T-cell (primary cell): ENCODE measurements at regions of chr3 and their contacts with region 1.

Region 1: GRCh38 chr3:107660306-107660976 is 137.7 kb downstream of the BBX start:
- DNase-seq: peak in 2 of 35 experiments; percentile 13 to 58
- ATAC-seq: no peak
- H3K4me3 ChIP-seq: no peak overlapping the region
- H3K4me3 Mint-ChIP-seq: no peak overlapping the region
- H3K27ac ChIP-seq: no peak overlapping the region
- H3K27ac Mint-ChIP-seq: no peak overlapping the region
- H3K4me1 ChIP-seq: peaks cover 0 to 10% of the 10 kb centered on the region in 2 experiments
- H3K4me1 Mint-ChIP-seq: peaks cover 26 to 30% (median 28%) of the 10 kb centered on the region in 3 donors
- H3K27me3 ChIP-seq: no peaks in the 10 kb centered on the region
- H3K27me3 Mint-ChIP-seq: no peaks in the 10 kb centered on the region

Region 2: GRCh38 chr3:107670986-107671385 is 10.5 kb after region 1 on chr3:
- CTCF ChIA-PET with region 1: interaction called, 19 to 40 read pairs
- POLR2A ChIA-PET with region 1: interaction called, 3 to 5 read pairs
- DNase-seq: no peak
- ATAC-seq: no peak
- H3K4me3 ChIP-seq: no peak overlapping the region
- H3K4me3 Mint-ChIP-seq: no peak overlapping the region
- H3K27ac ChIP-seq: no peak overlapping the region
- H3K27ac Mint-ChIP-seq: no peak overlapping the region
- H3K4me1 ChIP-seq: peaks cover 0 to 6% of the 10 kb centered on the region in 2 experiments
- H3K4me1 Mint-ChIP-seq: peaks cover 35 to 47% (median 40%) of the 10 kb centered on the region in 3 donors
- H3K27me3 ChIP-seq: no peaks in the 10 kb centered on the region
- H3K27me3 Mint-ChIP-seq: no peaks in the 10 kb centered on the region

Region 3: DNA sequence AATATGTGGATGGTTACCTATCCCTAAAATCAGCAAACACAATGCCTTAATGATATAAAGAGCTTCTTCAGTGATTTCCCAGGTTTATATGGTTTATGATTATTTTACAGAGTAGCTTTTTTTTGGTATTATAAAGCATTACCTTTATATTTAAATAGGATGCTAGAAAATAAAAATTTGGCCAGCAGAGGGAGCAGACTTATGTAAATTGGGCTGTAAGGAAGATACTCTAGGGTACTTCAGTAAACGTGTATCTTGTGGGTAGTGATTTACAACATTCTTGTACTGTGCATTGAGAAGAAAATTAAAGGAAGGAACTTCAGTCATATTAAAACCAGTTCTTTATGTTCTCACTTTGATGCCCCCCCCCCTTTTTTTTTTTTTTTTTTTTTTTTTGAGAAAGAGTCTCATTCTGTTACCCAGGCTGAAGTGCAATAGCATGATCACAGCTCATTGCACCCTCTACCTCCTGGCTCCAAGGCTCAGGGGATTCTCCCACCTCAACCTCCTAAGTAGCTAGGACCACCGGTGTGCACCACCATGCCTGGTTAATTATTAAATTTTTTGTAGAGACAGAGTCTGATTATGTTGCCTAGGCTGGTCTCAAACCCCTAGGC is 30.2 kb after region 1 on chr3:
- CTCF ChIA-PET with region 1: interaction called, 4 to 23 read pairs
- POLR2A ChIA-PET with region 1: no interaction called
- DNase-seq: peak in 2 of 35 experiments; percentile 6 to 71
- ATAC-seq: peak; percentile 43 to 74 (median 54)
- H3K4me3 ChIP-seq: no peak overlapping the region
- H3K4me3 Mint-ChIP-seq: no peak overlapping the region
- H3K27ac ChIP-seq: no peak overlapping the region
- H3K27ac Mint-ChIP-seq: no peak overlapping the region
- H3K4me1 ChIP-seq: peaks cover 0 to 4% of the 10 kb centered on the region in 2 experiments
- H3K4me1 Mint-ChIP-seq: peaks cover 28 to 39% (median 34%) of the 10 kb centered on the region in 3 donors
- H3K27me3 ChIP-seq: no peaks in the 10 kb centered on the region
- H3K27me3 Mint-ChIP-seq: no peaks in the 10 kb centered on the region

Region 4: GRCh38 chr3:107767897-107768605 is 107.6 kb after region 1 on chr3:
- CTCF ChIA-PET with region 1: interaction called in 1 of 2 experiments, 10 read pairs
- POLR2A ChIA-PET with region 1: no interaction called
- DNase-seq: no peak
- ATAC-seq: no peak
- H3K4me3 ChIP-seq: no peak overlapping the region
- H3K4me3 Mint-ChIP-seq: no peak overlapping the region
- H3K27ac ChIP-seq: no peak overlapping the region
- H3K27ac Mint-ChIP-seq: no peak overlapping the region
- H3K4me1 ChIP-seq: no peaks in the 10 kb centered on the region
- H3K4me1 Mint-ChIP-seq: no peaks in the 10 kb centered on the region
- H3K27me3 ChIP-seq: no peaks in the 10 kb centered on the region
- H3K27me3 Mint-ChIP-seq: no peaks in the 10 kb centered on the region

Region 5: GRCh38 chr3:107806536-107806935 is 146.1 kb after region 1 on chr3:
- CTCF ChIA-PET with region 1: no interaction called
- POLR2A ChIA-PET with region 1: no interaction called
- DNase-seq: no peak
- ATAC-seq: no peak
- H3K4me3 ChIP-seq: no peak overlapping the region
- H3K4me3 Mint-ChIP-seq: no peak overlapping the region
- H3K27ac ChIP-seq: no peak overlapping the region
- H3K27ac Mint-ChIP-seq: no peak overlapping the region
- H3K4me1 ChIP-seq: no peaks in the 10 kb centered on the region
- H3K4me1 Mint-ChIP-seq: peaks cover 0 to 15% (median 12%) of the 10 kb centered on the region in 3 donors
- H3K27me3 ChIP-seq: no peaks in the 10 kb centered on the region
- H3K27me3 Mint-ChIP-seq: no peaks in the 10 kb centered on the region

Region 6: GRCh38 chr3:108477511-108478147 is 817.2 kb after region 1 on chr3:
- CTCF ChIA-PET with region 1: interaction called, 11 to 19 read pairs
- POLR2A ChIA-PET with region 1: no interaction called
- DNase-seq: peak in 34 of 35 experiments; percentile 7 to 74 (median 44)
- ATAC-seq: peak; percentile 60 to 72 (median 68)
- H3K4me3 ChIP-seq: no peak overlapping the region
- H3K4me3 Mint-ChIP-seq: no peak overlapping the region
- H3K27ac ChIP-seq: no peak overlapping the region
- H3K27ac Mint-ChIP-seq: no peak overlapping the region
- H3K4me1 ChIP-seq: no peaks in the 10 kb centered on the region
- H3K4me1 Mint-ChIP-seq: peaks cover 0 to 3% (median 3%) of the 10 kb centered on the region in 3 donors
- H3K27me3 ChIP-seq: no peaks in the 10 kb centered on the region
- H3K27me3 Mint-ChIP-seq: peaks cover 2 to 3% of the 10 kb centered on the region in 2 donors